Activated CD4-positive, alpha-beta memory T cell treated with anti-CD3 and anti-CD28 coated beads for 36 hours (primary cell): ENCODE measurements at regions of chr13 and their contacts with region 1.

Region 1: GRCh38 chr13:30617315-30618185 is at the start of gene USPL1:
- DNase-seq: peak; percentile 99
- H3K4me3 Mint-ChIP-seq: no peak within 1 kb of the TSS
- H3K27ac Mint-ChIP-seq: no peak within 1 kb of the TSS
- H3K4me1 Mint-ChIP-seq: peaks cover 26% of the 10 kb centered on the region
- H3K27me3 Mint-ChIP-seq: no peaks in the 10 kb centered on the region
- total RNA-seq, gene USPL1: 13.3 to 13.8 TPM

Region 2: GRCh38 chr13:30142486-30143211 is 474.9 kb before region 1 on chr13:
- CTCF ChIA-PET with region 1: interaction called, 4 read pairs
- POLR2A ChIA-PET with region 1: interaction called, 5 read pairs
- intact Hi-C with region 1: loop called (anchors 2 kb)
- DNase-seq: peak; percentile 68
- H3K4me3 Mint-ChIP-seq: no peak overlapping the region
- H3K27ac Mint-ChIP-seq: peak overlapping the region; percentile 92
- H3K4me1 Mint-ChIP-seq: peaks cover 70% of the 10 kb centered on the region
- H3K27me3 Mint-ChIP-seq: no peaks in the 10 kb centered on the region

Region 3: GRCh38 chr13:30429721-30430694 is 187.5 kb before region 1 on chr13:
- CTCF ChIA-PET with region 1: no interaction called
- POLR2A ChIA-PET with region 1: no interaction called
- intact Hi-C with region 1: loop called (anchors 1 kb)
- DNase-seq: peak; percentile 47
- H3K4me3 Mint-ChIP-seq: peak overlapping the region; percentile 61
- H3K27ac Mint-ChIP-seq: peak overlapping the region; percentile 86
- H3K4me1 Mint-ChIP-seq: peaks cover 26% of the 10 kb centered on the region
- H3K27me3 Mint-ChIP-seq: no peaks in the 10 kb centered on the region

Region 4: GRCh38 chr13:30654430-30654829 is 36.9 kb after region 1 on chr13:
- CTCF ChIA-PET with region 1: no interaction called
- POLR2A ChIA-PET with region 1: interaction called, 7 read pairs
- intact Hi-C with region 1: loop called (anchors 1 kb)
- DNase-seq: peak; percentile 43
- H3K4me3 Mint-ChIP-seq: no peak overlapping the region
- H3K27ac Mint-ChIP-seq: peak overlapping the region; percentile 42
- H3K4me1 Mint-ChIP-seq: peaks cover 33% of the 10 kb centered on the region
- H3K27me3 Mint-ChIP-seq: no peaks in the 10 kb centered on the region

Region 5: DNA sequence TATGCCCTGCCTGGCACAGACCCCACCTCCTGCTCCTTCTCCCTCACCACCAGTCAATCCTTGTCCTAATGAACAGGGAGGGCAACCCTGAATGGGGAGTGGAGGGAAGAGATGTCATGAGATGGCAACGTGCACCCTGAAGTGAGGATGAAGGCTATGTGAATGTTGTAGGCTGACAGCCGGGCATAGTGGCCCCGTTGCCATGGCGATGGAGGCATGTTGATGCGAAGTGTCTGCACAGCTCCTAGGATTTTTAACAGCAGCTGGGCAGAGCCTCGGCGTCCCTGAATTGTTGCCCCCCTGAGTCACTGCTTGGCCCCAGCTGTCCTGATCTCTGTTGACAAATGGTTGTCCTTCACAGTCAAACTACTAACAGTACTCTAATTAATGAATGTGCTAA is 113.0 kb after region 1 on chr13:
- CTCF ChIA-PET with region 1: no interaction called
- POLR2A ChIA-PET with region 1: no interaction called
- intact Hi-C with region 1: no loop called
- DNase-seq: no peak
- H3K4me3 Mint-ChIP-seq: no peak overlapping the region
- H3K27ac Mint-ChIP-seq: no peak overlapping the region
- H3K4me1 Mint-ChIP-seq: peaks cover 13% of the 10 kb centered on the region
- H3K27me3 Mint-ChIP-seq: no peaks in the 10 kb centered on the region

Region 6: DNA sequence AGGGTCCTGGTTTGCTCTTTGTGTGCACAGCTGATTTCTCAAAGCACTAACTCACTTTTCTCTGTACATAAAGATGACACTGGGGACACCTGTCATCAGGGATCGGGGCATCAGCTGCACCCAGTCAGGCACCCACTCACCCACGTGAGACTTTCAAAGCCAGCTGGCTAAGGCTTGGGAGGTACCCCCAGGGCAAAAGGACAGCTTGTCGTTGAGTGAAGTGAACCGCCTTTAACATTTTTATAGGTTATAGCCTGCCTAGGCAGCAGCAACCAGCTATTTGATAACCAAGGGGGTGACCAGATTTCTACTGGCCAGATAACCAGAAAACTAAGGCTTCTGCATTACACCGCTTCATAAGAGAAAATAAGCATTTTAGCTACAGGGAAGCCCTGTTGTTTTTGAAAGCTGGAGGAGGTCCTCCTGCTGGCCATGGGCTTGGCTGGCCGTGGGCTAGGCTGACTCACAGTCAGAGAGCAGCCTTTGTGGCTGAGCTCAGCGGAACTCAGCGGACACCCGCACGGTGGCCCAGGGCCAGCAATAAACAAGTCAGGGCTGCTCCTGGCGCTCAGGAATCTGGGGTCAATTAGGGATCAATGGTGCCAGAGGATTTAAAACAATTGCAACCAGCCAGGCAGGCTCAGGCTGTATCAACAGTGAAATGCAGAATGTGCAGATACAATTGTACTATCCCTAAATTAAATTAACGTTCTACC is 174.9 kb after region 1 on chr13:
- CTCF ChIA-PET with region 1: interaction called, 4 read pairs
- POLR2A ChIA-PET with region 1: no interaction called
- intact Hi-C with region 1: loop called (anchors 2 kb)
- DNase-seq: no peak
- H3K4me3 Mint-ChIP-seq: no peak overlapping the region
- H3K27ac Mint-ChIP-seq: no peak overlapping the region
- H3K4me1 Mint-ChIP-seq: peaks cover 35% of the 10 kb centered on the region
- H3K27me3 Mint-ChIP-seq: no peaks in the 10 kb centered on the region

Region 7: GRCh38 chr13:31199849-31200636 is 582.5 kb after region 1 on chr13 and contains the start of gene B3GLCT:
- CTCF ChIA-PET with region 1: no interaction called
- POLR2A ChIA-PET with region 1: no interaction called
- intact Hi-C with region 1: loop called (anchors 1 kb)
- DNase-seq: peak; percentile 84
- H3K4me3 Mint-ChIP-seq: peak within 1 kb of the TSS; percentile 77
- H3K27ac Mint-ChIP-seq: peak within 1 kb of the TSS; percentile 78
- H3K4me1 Mint-ChIP-seq: peaks cover 26% of the 10 kb centered on the region
- H3K27me3 Mint-ChIP-seq: no peaks in the 10 kb centered on the region
- total RNA-seq, gene B3GLCT: 2.6 to 2.8 TPM